IMR-90 (cell line): ENCODE measurements at regions of chr10 and their contacts with region 1.

Region 1: GRCh38 chr10:74300666-74301065 is 149.6 kb downstream of the ADK start:
- DNase-seq: no peak
- ATAC-seq: no peak
- H3K4me3 ChIP-seq: no peak overlapping the region
- H3K27ac ChIP-seq: no peak overlapping the region
- H3K4me1 ChIP-seq: no peaks in the 10 kb centered on the region
- H3K27me3 ChIP-seq: no peaks in the 10 kb centered on the region
- CTCF ChIP-seq: no peak
- POLR2A ChIP-seq: no peak
- RAD21 ChIP-seq: no peak

Region 2: DNA sequence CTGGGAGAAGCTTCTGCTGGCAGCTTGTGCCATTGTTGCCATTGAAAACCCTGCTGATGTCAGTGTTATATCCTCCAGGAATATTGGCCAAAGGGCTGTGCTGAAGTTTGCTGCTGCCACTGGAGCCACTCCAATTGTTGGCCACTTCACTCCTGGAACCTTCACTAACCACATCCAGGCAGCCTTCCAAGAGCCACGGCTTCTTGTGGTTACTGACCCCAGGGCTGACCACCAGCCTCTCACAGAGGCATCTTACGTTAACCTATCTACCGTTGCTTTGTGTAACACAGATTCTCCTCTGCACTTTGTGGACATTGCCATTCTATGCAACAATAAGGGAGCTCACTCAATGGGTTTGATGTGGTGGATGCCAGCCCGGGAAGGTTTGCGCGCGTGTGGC is 71.0 kb after region 1 on chr10:
- CTCF ChIA-PET with region 1: no interaction called
- POLR2A ChIA-PET with region 1: interaction called, 17 read pairs
- dilution Hi-C with region 1: no loop called
- in situ Hi-C with region 1: no loop called
- intact Hi-C with region 1: no loop called
- DNase-seq: peak; percentile 51
- ATAC-seq: no peak
- H3K4me3 ChIP-seq: no peak overlapping the region
- H3K27ac ChIP-seq: no peak overlapping the region
- H3K4me1 ChIP-seq: no peaks in the 10 kb centered on the region; the same call in 1 of the 2 replicates
- H3K27me3 ChIP-seq: no peaks in the 10 kb centered on the region
- CTCF ChIP-seq: no peak
- POLR2A ChIP-seq: no peak
- RAD21 ChIP-seq: no peak